Activated CD4-positive, alpha-beta T cell treated with anti-CD3 and anti-CD28 coated beads for 36 hours (primary cell): ENCODE measurements at regions of chr20 and their contacts with region 1.

Region 1: DNA sequence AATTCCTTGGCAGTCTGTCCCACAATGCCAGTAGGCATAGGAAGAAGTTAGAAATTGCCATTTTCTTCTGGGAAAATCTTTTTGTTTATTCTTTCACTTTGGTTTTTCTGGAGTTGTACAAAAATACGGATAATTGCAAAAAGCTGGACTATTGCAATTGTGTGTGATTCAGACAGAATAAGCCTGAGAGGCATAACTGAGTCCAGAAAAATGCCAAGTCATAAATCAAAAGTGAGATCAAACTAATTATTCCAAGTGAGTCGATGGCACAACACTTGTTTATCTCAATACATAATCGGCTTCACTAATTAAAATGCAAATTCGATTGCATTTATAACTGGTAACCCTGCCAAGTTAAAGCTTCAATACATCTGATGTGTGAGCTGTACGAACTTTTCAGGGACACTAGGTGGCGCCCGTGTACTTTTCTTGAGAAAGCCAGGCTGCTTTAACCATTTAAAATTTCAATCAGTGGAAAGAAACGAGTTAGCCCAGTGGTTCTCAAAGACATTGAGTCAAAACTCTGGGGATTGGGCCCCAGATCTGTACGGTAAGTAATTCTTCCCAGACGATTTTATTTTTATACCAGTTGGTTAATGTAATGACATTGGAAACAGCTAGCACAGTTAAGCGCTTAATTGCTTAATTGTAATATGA is 102.6 kb downstream of the LAMP5 start:
- DNase-seq: peak; percentile 76
- ATAC-seq: peak; percentile 68
- H3K4me3 Mint-ChIP-seq: no peak overlapping the region
- H3K27ac Mint-ChIP-seq: no peak overlapping the region
- H3K4me1 Mint-ChIP-seq: no peaks in the 10 kb centered on the region
- H3K27me3 Mint-ChIP-seq: peaks cover 11% of the 10 kb centered on the region

Region 2: DNA sequence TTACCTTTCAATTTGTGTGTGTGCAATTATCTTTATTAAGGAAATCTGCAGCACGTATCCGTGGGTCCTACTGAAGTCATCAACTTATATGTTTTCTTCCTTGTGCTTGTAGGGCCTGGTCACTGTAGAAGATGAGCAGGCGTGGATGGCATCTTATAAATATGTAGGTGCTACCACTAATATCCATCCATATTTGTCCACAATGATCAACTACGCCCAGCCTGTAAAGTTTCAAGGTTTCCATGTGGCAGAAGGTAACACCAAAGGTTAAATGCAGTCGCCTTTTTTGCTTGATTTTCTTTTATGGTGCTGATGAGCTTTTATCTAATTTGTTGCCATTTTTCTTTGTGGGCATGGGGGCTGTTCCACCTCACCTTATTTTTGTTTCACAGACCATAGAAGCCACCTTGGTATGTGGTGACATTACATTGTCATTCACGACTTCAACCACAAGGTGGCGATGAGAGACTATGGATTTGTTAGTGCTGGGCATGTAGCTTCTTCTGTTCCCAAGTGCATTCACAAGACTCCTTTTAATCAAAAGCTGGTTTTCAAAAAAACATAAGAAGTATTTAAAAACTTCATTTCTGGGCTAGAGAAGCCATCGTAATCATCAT is 209.0 kb before region 1 on chr20:
- CTCF ChIA-PET with region 1: interaction called, 123 read pairs
- POLR2A ChIA-PET with region 1: no interaction called
- intact Hi-C with region 1: no loop called
- DNase-seq: peak; percentile 70
- ATAC-seq: peak; percentile 66
- H3K4me3 Mint-ChIP-seq: no peak overlapping the region
- H3K27ac Mint-ChIP-seq: no peak overlapping the region
- H3K4me1 Mint-ChIP-seq: no peaks in the 10 kb centered on the region
- H3K27me3 Mint-ChIP-seq: no peaks in the 10 kb centered on the region

Region 3: DNA sequence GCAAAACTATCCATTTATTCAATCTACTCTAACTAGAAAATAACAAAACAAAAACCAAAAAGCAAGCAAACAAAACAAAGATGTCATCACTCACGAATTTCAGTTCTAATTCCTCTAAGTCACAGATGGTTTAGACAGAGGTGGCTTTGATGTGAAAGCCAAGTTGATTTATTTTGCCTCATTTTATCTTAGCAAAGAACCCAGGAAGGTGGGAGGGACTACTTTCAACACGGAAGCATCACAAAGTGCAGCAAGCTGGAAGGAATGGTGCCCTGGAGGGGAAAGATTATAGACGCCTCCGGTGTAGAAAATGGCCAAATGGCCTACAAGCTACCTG is 14.1 kb before region 1 on chr20:
- CTCF ChIA-PET with region 1: interaction called, 20 read pairs
- POLR2A ChIA-PET with region 1: no interaction called
- intact Hi-C with region 1: no loop called
- DNase-seq: no peak
- ATAC-seq: no peak
- H3K4me3 Mint-ChIP-seq: no peak overlapping the region
- H3K27ac Mint-ChIP-seq: no peak overlapping the region
- H3K4me1 Mint-ChIP-seq: no peaks in the 10 kb centered on the region
- H3K27me3 Mint-ChIP-seq: peaks cover 4% of the 10 kb centered on the region

Region 4: DNA sequence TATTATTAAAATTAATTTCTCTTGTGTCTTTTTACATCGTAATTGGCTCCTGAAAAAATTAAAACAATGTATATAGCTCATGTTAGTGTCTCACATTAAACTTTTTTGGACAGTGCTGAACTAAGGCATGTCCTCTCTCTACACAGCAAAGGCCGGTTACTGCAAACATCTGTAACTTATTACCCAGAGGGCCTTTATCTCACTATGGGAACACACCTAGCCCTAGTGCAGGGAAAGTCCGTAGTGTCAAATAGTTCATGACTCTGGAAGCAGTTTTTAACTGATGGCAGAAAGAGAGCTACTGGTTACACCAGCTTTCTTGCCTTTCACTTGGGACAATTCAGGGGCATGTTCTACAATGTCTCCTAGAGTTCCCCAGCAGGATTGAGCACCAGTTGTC is 139.7 kb after region 1 on chr20:
- CTCF ChIA-PET with region 1: no interaction called
- POLR2A ChIA-PET with region 1: no interaction called
- intact Hi-C with region 1: no loop called
- DNase-seq: no peak
- ATAC-seq: no peak
- H3K4me3 Mint-ChIP-seq: no peak overlapping the region
- H3K27ac Mint-ChIP-seq: no peak overlapping the region
- H3K4me1 Mint-ChIP-seq: no peaks in the 10 kb centered on the region
- H3K27me3 Mint-ChIP-seq: peaks cover 2% of the 10 kb centered on the region

Region 5: DNA sequence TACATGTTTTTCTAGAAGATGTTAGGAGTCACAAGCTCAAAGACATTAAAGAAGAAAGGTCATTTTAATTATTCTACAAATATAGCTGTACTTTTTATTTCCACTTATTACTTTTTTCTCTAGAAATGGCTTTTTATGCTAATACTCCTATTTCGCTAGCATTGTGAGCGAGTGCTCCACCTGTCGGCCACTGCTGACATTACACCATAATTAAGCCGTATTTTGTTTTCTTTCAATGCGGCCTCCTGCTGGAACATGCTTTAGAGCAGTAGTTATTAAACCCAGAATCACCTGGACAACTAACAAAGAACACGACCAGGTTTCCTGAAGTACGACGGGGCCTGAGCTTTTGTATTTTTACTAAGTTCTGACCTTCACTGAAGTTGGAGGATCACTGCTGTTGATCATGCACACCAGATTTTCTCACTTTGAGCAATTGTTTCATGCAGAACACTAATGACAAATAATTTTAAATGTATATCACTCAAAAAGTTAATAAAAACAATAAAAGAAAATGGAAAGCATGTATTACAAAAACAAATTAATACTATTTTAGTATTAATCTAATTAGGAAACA is 296.0 kb after region 1 on chr20:
- CTCF ChIA-PET with region 1: interaction called, 56 read pairs
- POLR2A ChIA-PET with region 1: no interaction called
- intact Hi-C with region 1: loop called (anchors 1 kb)
- DNase-seq: peak; percentile 47
- ATAC-seq: no peak
- H3K4me3 Mint-ChIP-seq: no peak overlapping the region
- H3K27ac Mint-ChIP-seq: no peak overlapping the region
- H3K4me1 Mint-ChIP-seq: no peaks in the 10 kb centered on the region
- H3K27me3 Mint-ChIP-seq: peaks cover 17% of the 10 kb centered on the region

Region 6: DNA sequence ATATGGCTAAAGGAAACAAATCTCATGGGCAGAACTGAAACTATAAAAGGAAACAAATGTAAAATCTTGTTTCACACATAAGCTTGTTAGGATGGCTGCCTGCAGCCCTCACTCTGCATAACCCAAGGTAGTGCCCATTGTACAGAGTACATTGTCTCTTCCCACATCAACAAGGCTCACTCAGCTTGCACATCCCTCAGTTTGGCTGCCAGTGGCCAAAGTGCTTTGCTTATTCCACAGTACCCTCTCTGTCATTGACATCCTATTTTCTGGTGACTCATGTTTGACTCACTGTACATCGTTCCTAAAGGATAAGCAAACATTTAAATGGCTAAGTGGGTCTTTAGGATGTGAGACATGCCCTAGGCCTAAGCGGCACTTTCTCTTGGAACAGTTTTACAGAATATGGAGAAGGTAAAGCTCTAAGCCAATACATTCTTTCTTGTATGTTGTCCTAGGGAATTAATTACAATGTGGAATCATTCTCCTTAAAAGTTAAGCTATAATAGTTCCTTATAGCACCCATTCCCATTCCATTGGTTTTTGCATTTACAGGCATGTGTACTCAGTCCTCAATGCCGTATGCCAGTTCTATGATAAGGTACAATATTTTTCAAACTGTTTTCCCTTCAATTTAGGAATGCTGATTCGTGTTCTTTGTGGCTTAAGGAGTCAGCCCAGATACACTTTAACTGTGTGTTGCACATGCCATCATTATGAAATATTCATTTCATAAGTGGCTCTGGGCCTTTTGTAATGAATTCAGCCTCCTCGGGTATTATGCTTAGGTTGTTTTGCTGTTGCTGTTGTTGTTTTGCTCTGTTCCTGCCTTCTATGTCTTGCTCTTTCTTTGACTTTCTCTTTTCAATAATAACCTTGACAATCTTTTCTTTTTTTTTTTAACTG is 423.4 kb after region 1 on chr20:
- CTCF ChIA-PET with region 1: no interaction called
- POLR2A ChIA-PET with region 1: no interaction called
- intact Hi-C with region 1: no loop called
- DNase-seq: no peak
- ATAC-seq: no peak
- H3K4me3 Mint-ChIP-seq: no peak overlapping the region
- H3K27ac Mint-ChIP-seq: no peak overlapping the region
- H3K4me1 Mint-ChIP-seq: peaks cover 14% of the 10 kb centered on the region
- H3K27me3 Mint-ChIP-seq: no peaks in the 10 kb centered on the region

Region 7: GRCh38 chr20:10090588-10091166 is 473.7 kb after region 1 on chr20:
- CTCF ChIA-PET with region 1: interaction called, 14 read pairs
- POLR2A ChIA-PET with region 1: no interaction called
- intact Hi-C with region 1: loop called (anchors 5 kb)
- DNase-seq: peak; percentile 37
- ATAC-seq: peak; percentile 63
- H3K4me3 Mint-ChIP-seq: no peak overlapping the region
- H3K27ac Mint-ChIP-seq: no peak overlapping the region
- H3K4me1 Mint-ChIP-seq: no peaks in the 10 kb centered on the region
- H3K27me3 Mint-ChIP-seq: peaks cover 3% of the 10 kb centered on the region

Region 8: GRCh38 chr20:10427060-10427692 is 810.2 kb after region 1 on chr20:
- CTCF ChIA-PET with region 1: no interaction called
- POLR2A ChIA-PET with region 1: no interaction called
- intact Hi-C with region 1: loop called (anchors 10 kb)
- DNase-seq: peak; percentile 66
- ATAC-seq: no peak
- H3K4me3 Mint-ChIP-seq: no peak overlapping the region
- H3K27ac Mint-ChIP-seq: no peak overlapping the region
- H3K4me1 Mint-ChIP-seq: peaks cover 41% of the 10 kb centered on the region
- H3K27me3 Mint-ChIP-seq: no peaks in the 10 kb centered on the region

Region 9: DNA sequence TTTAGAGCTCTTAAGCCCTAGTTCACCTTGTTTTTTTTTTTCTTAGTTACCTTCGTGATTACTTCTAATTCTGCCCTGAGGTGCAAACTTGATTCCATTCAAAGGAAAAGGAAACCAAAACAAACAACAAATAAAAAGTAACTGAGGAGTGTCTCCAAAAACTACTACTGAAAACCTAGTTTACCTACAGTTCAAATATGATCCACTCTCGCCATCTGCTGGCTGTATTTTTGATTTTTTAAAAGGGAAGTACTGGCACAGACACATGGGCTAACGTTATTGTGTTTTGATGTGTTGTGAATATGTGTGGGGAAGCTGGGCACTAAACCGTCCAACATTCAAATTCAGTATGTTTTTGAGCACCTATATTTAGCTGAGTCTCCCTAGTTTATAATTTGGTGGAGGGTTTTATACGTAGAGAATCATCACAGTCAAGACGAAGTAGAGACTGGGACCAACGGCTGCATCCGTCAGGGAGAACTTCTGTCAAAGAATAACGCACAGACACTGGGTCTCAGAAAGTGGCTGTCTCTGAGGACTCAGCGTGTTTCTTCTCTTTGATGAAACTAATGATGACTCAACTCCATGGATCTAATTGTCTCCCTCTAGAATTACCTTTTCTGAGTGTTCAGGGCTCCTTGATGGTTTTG is 1927.2 kb after region 1 on chr20:
- CTCF ChIA-PET with region 1: interaction called, 4 read pairs
- POLR2A ChIA-PET with region 1: no interaction called
- intact Hi-C with region 1: loop called in 1 of 2 experiments (anchors 5 kb)
- DNase-seq: peak; percentile 25
- ATAC-seq: no peak
- H3K4me3 Mint-ChIP-seq: no peak overlapping the region
- H3K27ac Mint-ChIP-seq: no peak overlapping the region
- H3K4me1 Mint-ChIP-seq: no peaks in the 10 kb centered on the region
- H3K27me3 Mint-ChIP-seq: no peaks in the 10 kb centered on the region